AG04450 (cell line): ENCODE measurements at regions of chr17 and their contacts with region 1.

Region 1: DNA sequence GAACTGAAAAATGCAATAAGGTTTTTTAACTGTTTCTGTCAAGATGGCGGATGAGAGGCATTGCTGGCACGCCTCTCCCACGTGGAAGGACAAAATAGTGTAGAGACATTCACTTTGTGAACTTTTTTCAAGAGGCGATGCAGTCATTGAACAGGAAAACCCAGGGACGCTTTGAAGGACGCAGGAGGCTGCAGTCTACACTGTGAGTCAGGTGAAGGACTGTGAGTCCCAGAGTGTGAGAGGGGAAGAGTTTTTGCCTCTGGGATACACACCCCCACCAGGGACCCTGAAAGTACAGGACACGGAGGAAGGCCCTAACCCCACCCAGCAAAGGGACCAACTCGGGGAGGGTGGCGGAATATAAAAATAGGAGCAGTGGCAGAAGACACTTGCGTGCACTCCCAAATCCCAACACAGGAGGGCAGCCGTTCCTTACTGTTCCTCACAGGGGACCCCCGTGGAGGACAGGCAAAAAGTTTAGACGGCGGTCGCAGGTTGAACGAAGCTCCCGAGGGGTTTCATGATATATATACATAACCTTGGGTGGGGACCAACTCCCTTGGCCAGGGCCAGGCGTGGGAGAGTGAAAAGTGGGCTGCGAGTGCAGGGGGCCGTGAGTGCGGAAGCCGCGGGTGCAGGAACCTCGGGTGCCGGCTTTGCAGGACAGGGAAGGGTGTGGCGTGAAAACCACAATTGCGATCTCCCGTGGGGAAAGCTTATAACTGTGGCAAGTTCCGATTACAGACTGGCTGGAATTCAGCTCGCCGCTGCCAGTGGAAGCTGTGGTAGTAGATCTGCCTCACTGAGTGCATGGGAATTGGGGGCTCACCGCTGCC is 82.0 kb upstream of the ALOX12 start:
- DNase-seq: no peak
- H3K4me3 ChIP-seq: no peak overlapping the region
- H3K27ac ChIP-seq: no peak overlapping the region
- H3K27me3 ChIP-seq: peaks cover 8% of the 10 kb centered on the region
- CTCF ChIP-seq: peak; percentile 77

Region 2: DNA sequence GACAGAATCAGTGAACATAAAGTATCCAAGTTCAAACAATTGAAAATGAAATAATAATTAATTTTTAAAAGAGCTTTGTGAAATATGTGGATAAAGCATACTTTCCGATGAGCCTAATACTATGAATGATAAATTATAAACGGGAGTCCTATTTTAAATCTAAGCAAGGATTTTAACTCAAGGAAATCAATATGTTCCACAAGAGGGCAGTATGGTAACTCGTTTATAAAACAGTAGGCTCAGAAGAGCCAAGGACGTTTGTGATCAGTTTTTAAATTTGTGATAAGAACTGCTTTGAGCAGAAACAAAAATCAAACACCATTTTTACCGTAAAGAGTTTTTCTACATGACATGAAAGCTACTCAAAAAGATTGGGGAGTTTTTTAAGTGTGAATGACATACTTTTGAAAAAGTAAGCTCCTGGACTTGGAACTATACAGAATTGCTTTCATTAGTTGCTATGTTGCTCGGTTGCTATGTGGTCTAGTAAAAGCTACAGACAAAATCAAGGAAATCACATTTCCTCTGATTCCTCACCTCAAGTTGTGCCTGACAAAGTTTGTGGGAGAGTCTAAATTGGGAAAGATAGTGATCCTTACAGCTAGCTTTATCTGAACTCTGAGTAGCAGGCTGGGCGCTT is 70.5 kb before region 1 on chr17:
- CTCF ChIA-PET with region 1: interaction called, 14 read pairs
- POLR2A ChIA-PET with region 1: no interaction called
- DNase-seq: no peak
- H3K4me3 ChIP-seq: no peak overlapping the region
- H3K27ac ChIP-seq: no peak overlapping the region
- H3K27me3 ChIP-seq: no peaks in the 10 kb centered on the region
- CTCF ChIP-seq: peak; percentile 47; the same call in 1 of the 2 replicates

Region 3: DNA sequence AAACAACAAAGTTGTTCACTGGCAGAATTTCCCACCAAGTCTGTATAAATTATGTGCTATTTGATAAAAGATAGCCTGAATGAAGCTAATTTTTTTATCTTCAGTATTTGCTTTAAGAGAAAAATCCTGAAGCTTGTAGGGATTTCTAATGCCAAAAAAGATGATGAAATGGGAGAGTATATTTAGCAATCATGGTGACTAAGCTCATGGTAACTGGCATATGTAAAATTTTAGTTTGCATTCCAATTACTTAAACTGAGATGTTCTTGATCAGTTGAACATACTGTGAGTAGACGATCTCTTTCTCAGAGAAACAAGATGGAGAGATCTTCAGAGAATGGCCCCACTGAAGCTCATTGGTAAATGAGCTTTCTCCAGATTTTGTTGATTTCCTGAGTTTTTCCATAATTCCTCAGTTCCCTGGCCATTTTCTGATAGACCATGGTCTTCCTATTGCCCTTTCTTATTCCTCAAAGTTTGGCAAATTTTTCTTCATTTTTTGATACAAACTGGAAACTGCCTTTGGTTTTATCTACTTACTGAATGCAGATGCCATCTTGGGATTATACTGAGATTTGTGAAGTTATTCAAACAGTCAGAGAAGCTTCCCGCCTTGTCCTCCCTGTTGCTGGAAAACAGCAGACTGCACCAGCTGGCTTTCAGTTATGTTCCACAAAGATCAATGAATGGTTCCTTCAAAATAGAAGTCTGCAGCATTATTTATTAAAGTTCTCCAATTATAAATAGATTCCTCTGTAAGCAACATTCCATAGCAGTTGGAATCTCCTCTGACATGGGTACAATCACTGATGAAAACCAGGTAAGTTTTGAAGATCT is 13.7 kb after region 1 on chr17:
- CTCF ChIA-PET with region 1: interaction called, 48 read pairs
- POLR2A ChIA-PET with region 1: no interaction called
- DNase-seq: peak; percentile 6
- H3K4me3 ChIP-seq: no peak overlapping the region
- H3K27ac ChIP-seq: no peak overlapping the region
- H3K27me3 ChIP-seq: peaks cover 4% of the 10 kb centered on the region
- CTCF ChIP-seq: no peak

Region 4: DNA sequence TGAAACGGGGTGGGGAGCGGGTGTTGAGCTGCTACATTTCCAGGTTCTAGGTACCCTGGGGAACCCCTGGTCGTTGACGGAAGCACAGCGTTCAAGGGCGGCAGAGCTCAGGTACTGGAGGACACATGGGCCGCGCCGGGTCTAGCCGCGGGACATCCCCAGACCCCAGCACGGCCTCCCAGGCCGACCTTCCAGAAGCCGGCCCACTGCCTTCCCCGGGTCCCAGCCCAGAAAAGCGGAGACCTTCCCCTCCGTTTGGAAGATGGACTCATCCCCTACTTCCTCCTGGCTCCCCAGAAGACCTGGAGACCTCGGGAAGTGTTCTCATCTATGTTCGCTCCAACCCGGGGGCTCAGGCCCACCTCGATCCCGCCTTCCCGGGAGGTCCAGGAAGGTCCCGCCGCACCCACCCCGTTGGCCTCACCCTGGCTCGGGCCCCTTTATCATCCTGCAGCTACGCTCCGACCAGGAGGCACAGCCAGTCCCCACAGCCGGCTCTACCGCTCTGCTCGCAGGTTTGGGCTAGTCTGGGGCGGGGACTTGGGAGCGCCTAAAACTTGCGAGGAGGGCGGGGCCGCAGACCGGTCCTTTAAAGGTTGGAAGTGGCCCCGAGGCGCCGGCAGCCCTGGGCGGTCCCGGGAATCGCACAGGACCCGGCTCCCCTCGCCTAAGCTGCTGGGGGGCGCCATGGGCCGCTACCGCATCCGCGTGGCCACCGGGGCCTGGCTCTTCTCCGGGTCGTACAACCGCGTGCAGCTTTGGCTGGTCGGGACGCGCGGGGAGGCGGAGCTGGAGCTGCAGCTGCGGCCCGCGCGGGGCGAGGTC is 81.8 kb after region 1 on chr17 and contains the start of gene ALOX12:
- CTCF ChIA-PET with region 1: interaction called, 15 read pairs
- POLR2A ChIA-PET with region 1: no interaction called
- DNase-seq: no peak
- H3K4me3 ChIP-seq: no peak within 1 kb of the TSS
- H3K27ac ChIP-seq: no peak within 1 kb of the TSS
- H3K27me3 ChIP-seq: peaks cover 3% of the 10 kb centered on the region
- CTCF ChIP-seq: no peak
- polyA plus RNA-seq, gene ALOX12: not detected in 2 replicates

Region 5: GRCh38 chr17:7011942-7012254 is 98.1 kb after region 1 on chr17:
- CTCF ChIA-PET with region 1: interaction called, 218 read pairs
- POLR2A ChIA-PET with region 1: no interaction called
- DNase-seq: no peak
- H3K4me3 ChIP-seq: peak overlapping the region; percentile 97
- H3K27ac ChIP-seq: peak overlapping the region; percentile 99
- H3K27me3 ChIP-seq: no peaks in the 10 kb centered on the region
- CTCF ChIP-seq: no peak

Region 6: GRCh38 chr17:7045909-7046724 is 132.3 kb after region 1 on chr17:
- CTCF ChIA-PET with region 1: interaction called, 11 read pairs
- POLR2A ChIA-PET with region 1: no interaction called
- DNase-seq: peak; percentile 67
- H3K4me3 ChIP-seq: no peak overlapping the region
- H3K27ac ChIP-seq: no peak overlapping the region
- H3K27me3 ChIP-seq: peaks cover 36% of the 10 kb centered on the region
- CTCF ChIP-seq: peak; percentile 80